Heart left ventricle (tissue), 16 donors: ENCODE measurements at regions of chr2 and their contacts with region 1.

Region 1: GRCh38 chr2:72757177-72757775 is 68.6 kb downstream of the EXOC6B start:
- DNase-seq: peak in 2 of 5 donors; percentile 40 to 41
- ATAC-seq: peak; percentile 54 to 70 (median 68)
- H3K4me3 ChIP-seq: no peak overlapping the region
- H3K27ac ChIP-seq: peak overlapping the region in 10 of 12 donors; percentile 6 to 81 (median 40)
- H3K4me1 ChIP-seq: peaks cover 3 to 42% (median 25%) of the 10 kb centered on the region in 12 donors
- H3K27me3 ChIP-seq: no peaks in the 10 kb centered on the region
- CTCF ChIP-seq: no peak
- POLR2A ChIP-seq: no peak

Region 2: GRCh38 chr2:71530641-71531332 is 1226.5 kb before region 1 on chr2:
- intact Hi-C with region 1: loop called in 1 of 10 experiments (anchors 10 kb)
- DNase-seq: no peak
- ATAC-seq: peak in 3 of 4 donors; percentile 38 to 61 (median 59)
- H3K4me3 ChIP-seq: no peak overlapping the region
- H3K27ac ChIP-seq: no peak overlapping the region
- H3K4me1 ChIP-seq: no peaks in the 10 kb centered on the region
- H3K27me3 ChIP-seq: no peaks in the 10 kb centered on the region
- CTCF ChIP-seq: peak; percentile 47 to 73 (median 62)
- POLR2A ChIP-seq: no peak